Sigmoid colon (tissue), 7 donors: ENCODE measurements at regions of chr1 and their contacts with region 1.

Region 1: DNA sequence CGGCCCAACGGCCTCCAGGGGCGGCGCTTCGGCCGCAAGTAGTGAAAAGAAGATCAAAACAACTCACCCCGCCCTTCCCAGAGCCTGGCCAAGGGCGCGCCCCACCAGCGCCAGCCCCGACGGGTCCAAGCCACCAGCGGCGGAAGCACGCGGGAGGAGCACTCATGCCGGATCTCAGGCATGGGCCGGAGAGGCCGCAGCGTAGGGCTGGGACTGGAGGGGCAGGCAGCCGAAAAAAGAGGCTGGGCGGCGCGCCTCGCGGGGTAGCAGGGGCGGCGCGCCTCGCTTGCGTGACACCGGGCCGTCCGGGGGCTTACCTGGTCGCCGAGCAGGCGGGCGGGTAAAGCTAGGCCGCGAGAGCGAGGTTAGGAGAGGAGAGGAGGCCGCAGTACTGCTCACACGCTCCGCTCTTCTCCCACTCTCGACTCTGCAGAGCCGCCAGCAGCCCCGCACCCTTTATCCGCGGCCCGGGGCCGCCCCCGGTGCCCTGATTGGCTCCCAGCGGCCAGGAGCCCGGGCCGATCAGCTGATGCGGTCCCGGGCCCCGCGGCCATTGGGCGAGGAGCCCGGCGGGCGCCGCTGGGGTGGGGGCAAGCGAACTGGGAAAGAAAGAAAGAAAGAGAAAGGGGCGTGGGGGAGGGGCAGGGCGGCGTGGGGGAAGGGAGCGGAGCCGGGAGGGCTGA is at the start of gene GLUL:
- DNase-seq: peak; percentile 98
- H3K4me3 ChIP-seq: peak within 1 kb of the TSS; percentile 86 to 96 (median 92)
- H3K27ac ChIP-seq: peak within 1 kb of the TSS; percentile 97 to 100 (median 99)
- H3K4me1 ChIP-seq: peaks cover 0 to 40% (median 31%) of the 10 kb centered on the region in 4 donors
- H3K27me3 ChIP-seq: no peaks in the 10 kb centered on the region
- CTCF ChIP-seq: peak in 2 of 4 experiments; percentile 32 to 40
- EP300 ChIP-seq: no peak
- POLR2A ChIP-seq: peak; percentile 95 to 97
- total RNA-seq, gene GLUL: 757 to 1,489 (median 1,456) TPM

Region 2: DNA sequence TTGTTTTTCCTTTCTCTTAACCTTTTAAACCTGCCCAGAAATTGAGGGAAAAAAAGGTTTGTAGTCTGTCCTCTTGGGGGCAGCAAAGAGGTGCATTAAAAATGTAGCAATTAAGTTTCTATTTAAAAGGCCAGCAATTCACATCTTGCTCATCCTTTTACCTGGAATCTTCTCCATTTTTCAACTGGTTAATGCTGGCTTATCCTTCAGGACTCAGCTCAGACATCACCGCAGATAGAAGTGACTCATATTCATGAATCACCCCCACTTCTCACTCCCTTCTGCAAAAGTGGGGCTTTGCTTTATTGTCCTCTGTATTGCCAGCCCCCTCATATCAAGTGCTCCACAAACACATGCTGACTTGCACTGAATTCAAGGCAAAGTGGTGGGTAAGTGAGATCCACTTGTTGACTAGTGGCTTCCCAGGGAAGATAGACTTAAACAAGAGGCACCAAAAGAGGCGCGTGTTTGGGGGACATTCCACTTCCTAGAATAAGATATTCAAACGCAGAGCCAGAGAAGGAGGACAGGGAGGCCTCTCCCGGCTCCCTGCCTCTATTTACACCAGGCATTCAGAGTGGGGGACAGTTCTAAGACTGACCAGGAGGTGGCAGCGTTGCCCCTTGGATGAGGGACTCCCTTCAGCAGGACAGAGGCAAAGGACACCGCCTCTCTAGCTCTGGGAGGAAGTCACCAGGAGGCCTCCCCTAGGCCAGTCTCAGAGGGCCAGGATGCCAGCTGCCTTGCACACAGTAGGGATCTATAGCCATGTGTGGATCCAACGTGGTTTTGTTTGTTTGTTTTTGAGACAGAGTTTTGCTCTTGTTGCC is 306.8 kb before region 1 on chr1:
- intact Hi-C with region 1: loop called (anchors 1 kb)
- DNase-seq: peak; percentile 93
- H3K4me3 ChIP-seq: no peak overlapping the region
- H3K27ac ChIP-seq: peak overlapping the region in 2 of 4 donors; percentile 45 to 50
- H3K4me1 ChIP-seq: peaks cover 0 to 9% (median 3%) of the 10 kb centered on the region in 4 donors
- H3K27me3 ChIP-seq: no peaks in the 10 kb centered on the region
- CTCF ChIP-seq: peak; percentile 78 to 92 (median 90)
- EP300 ChIP-seq: no peak
- POLR2A ChIP-seq: no peak

Region 3: DNA sequence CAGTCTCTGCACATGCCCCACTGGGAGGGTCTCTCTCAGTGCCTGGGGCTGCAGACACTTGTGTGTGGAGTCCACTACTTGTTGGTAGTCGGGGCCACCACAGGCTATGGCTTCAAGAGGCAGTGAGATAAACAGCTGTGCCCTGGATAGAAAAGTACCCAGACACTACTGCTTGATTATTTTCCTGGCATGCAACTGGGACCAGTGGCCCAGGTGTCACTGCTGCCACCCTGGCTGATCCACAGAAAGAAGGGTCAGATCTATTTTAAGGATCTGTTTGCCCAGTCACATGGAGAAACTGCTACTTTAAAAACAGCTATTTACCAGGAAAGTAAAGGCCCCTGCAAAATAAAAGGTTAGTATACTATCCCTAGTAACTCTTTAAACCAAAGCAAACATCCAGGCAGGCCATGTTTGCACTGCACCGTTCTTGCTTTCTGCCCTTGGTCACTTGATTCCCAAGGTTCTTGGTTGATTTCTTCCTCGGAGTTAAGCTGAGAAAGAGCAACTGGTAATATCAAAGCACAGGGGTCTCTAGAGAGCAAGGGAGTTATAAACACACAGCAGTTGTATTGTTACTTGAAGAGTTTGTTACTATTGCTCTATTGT is 99.8 kb before region 1 on chr1:
- intact Hi-C with region 1: loop called (anchors 2 kb)
- DNase-seq: no peak
- H3K4me3 ChIP-seq: no peak overlapping the region
- H3K27ac ChIP-seq: peak overlapping the region; percentile 75 to 87 (median 78)
- H3K4me1 ChIP-seq: peaks cover 0 to 29% (median 21%) of the 10 kb centered on the region in 4 donors
- H3K27me3 ChIP-seq: no peaks in the 10 kb centered on the region
- CTCF ChIP-seq: no peak
- EP300 ChIP-seq: no peak
- POLR2A ChIP-seq: no peak

Region 4: DNA sequence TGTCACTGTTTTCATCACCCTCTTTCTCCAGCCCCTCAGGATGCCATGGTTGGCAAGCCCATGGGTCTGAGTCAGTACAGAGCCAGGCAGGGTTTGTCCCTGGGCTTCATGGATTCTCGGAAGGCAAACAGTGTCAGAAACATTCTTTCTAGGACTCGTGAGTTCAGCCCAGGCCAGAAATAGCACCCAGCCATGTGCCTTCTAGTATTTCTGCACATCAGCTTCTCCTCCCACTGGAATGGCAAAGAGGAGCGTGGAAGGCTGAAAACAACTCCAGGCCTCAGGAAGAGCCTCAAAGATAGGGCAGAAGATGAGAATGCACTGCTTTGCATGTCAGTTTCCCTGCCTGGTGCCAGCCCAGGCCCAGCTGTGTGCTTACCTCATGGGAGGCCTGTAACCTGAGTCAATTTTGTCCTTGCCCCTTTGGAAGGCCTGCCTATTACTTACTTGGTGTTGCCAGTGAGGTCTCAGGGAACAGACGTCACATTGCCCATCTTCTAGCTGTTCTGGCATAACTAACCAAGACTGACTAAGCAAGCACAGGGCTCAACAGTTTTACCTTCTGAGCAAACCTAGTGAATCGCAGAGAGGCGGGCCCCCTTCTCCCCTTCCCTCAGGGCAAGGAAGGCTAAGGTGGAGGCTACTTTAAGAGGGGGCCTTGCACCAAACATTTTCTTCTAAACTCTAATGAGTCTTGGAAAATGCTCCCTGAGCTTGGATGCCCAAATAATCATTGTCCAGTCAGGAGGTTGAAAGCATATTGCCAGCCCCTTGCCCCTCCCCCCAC is 42.3 kb before region 1 on chr1:
- intact Hi-C with region 1: loop called (anchors 5 kb)
- DNase-seq: peak; percentile 69
- H3K4me3 ChIP-seq: no peak overlapping the region
- H3K27ac ChIP-seq: peak overlapping the region; percentile 51 to 83 (median 68)
- H3K4me1 ChIP-seq: peaks cover 0 to 26% (median 20%) of the 10 kb centered on the region in 4 donors
- H3K27me3 ChIP-seq: no peaks in the 10 kb centered on the region
- CTCF ChIP-seq: no peak
- EP300 ChIP-seq: peak in 2 of 4 donors; percentile 72 to 87
- POLR2A ChIP-seq: no peak